A673 (cell line): ENCODE measurements at regions of chr19 and their contacts with region 1.

Region 1: GRCh38 chr19:38335949-38336637 is 463 bp downstream of the CATSPERG start:
- DNase-seq: peak; percentile 98
- H3K4me3 ChIP-seq: peak overlapping the region; percentile 59
- H3K27ac ChIP-seq: peak overlapping the region; percentile 61
- H3K4me1 ChIP-seq: no peaks in the 10 kb centered on the region
- H3K27me3 ChIP-seq: no peaks in the 10 kb centered on the region
- CTCF ChIP-seq: no peak

Region 2: DNA sequence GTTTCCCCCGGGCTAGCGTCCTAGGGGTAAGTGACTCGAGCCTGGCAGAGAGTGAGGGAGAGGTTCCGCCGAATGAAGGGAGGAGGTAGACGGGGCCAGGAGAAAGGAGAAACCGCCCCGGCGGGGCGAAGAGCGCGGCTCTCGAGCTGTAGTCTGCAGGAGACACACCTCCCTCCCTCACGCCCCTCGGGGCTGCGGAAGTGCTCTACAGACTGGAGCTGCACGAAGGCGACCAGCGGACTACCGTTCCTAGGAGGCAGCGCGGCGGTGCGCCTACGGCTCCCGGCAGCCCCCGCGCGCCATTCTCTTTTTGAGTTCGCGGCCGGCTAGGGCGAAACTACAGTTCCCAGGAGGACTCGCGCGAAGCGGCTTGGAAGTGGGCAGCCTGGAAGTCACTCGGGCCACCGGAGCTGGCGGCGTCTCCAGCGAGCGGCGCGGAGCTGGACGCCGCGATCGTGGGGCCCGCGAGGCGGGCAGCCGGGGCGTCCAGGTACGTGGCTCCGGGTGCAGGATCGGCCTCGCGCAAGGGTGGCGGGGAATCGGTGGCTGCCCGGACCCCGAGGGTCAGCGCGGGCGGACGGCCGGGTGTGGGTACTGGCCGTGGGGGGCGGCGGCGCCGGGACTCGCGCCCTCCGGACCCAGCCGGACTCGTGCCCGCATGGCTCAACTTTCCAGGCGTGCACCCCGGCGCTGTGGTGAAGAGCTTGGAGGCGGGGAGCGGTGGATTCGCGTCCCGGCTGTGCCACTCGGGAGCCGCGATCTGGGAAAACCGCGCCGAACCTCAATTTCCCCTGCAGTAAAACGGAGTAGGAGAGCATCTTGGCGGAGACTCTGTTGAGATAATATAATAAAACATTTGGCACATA is 429.0 kb before region 1 on chr19 and contains the start of gene SIPA1L3:
- CTCF ChIA-PET with region 1: no interaction called
- POLR2A ChIA-PET with region 1: no interaction called
- intact Hi-C with region 1: loop called (anchors 2 kb)
- DNase-seq: peak; percentile 97
- H3K4me3 ChIP-seq: peak within 1 kb of the TSS; percentile 91
- H3K27ac ChIP-seq: peak within 1 kb of the TSS; percentile 79
- H3K4me1 ChIP-seq: no peaks in the 10 kb centered on the region
- H3K27me3 ChIP-seq: no peaks in the 10 kb centered on the region
- CTCF ChIP-seq: no peak
- total RNA-seq, gene SIPA1L3: 17.5 and 19.9 TPM in 2 replicates

Region 3: GRCh38 chr19:38142176-38143035 is 193.7 kb before region 1 on chr19:
- CTCF ChIA-PET with region 1: interaction called, 4 read pairs
- POLR2A ChIA-PET with region 1: no interaction called
- intact Hi-C with region 1: loop called (anchors 10 kb)
- DNase-seq: peak; percentile 76
- H3K4me3 ChIP-seq: no peak overlapping the region
- H3K27ac ChIP-seq: no peak overlapping the region
- H3K4me1 ChIP-seq: no peaks in the 10 kb centered on the region
- H3K27me3 ChIP-seq: no peaks in the 10 kb centered on the region
- CTCF ChIP-seq: peak; percentile 84

Region 4: DNA sequence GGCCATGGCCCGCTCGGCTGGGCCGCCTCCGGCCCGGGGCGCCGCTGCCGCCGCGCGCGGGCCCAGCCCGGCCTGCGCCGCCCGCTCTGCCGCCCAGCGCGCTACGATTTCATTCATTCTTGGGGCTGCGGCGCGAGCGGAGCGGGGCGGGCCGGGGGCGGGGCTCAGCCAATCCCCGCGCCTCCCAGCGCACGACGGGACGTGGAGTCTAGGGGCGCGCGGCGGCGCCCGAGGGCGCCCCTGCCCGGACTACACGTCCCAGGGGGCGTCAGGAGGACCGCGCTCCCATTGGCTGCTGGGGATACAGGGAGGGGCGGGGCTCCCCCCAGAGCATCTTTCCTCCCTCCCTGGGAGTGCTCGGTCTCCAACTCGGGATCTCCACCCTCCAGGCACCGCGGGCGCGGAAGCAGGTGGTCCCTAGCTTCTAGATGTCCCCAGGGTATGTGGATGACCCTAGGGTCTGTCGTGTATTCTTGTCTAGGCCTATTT is 106.5 kb before region 1 on chr19:
- CTCF ChIA-PET with region 1: interaction called, 3 read pairs
- POLR2A ChIA-PET with region 1: no interaction called
- intact Hi-C with region 1: loop called (anchors 5 kb)
- DNase-seq: peak; percentile 91
- H3K4me3 ChIP-seq: peak overlapping the region; percentile 54
- H3K27ac ChIP-seq: no peak overlapping the region
- H3K4me1 ChIP-seq: no peaks in the 10 kb centered on the region
- H3K27me3 ChIP-seq: peaks cover 2% of the 10 kb centered on the region
- CTCF ChIP-seq: no peak

Region 5: GRCh38 chr19:38245826-38246498 is 90.1 kb before region 1 on chr19:
- CTCF ChIA-PET with region 1: no interaction called
- POLR2A ChIA-PET with region 1: interaction called, 5 read pairs
- intact Hi-C with region 1: loop called (anchors 2 kb)
- DNase-seq: no peak
- H3K4me3 ChIP-seq: no peak overlapping the region
- H3K27ac ChIP-seq: no peak overlapping the region
- H3K4me1 ChIP-seq: no peaks in the 10 kb centered on the region
- H3K27me3 ChIP-seq: no peaks in the 10 kb centered on the region
- CTCF ChIP-seq: no peak

Region 6: DNA sequence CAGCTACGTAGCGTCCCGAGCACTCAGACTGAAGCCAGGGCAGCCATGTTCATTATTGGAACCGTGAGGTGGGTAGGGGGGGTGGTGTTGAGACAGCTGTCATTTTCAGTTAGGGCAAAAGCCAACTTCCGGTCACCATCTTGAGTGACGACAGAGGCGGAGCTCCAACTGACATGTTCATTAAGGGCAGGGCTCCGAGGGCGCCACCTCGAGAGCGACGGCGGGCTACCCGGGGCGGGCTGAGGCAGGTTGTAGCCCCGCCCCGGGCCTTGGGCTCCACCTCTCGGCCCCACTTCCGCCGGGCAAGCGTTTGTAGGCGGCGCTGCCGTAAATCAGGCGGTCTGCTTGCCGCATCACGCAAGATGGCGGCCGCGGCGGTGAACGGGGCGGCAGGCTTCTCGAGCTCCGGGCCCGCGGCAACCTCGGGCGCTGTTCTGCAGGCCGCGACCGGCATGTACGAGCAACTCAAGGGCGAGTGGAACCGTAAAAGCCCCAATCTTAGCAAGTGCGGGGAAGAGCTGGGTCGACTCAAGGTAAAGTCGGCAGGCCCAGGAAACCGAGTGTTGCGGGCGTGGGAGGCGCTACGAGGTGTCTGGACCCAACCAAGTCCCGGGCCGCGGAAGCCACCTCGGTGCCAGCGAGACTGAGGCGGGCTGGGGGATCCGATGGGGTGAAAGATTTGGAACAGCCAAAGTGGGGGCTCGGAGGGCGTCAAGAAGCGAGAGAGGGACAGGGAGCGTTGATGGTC is 38.5 kb after region 1 on chr19 and contains the start of gene PSMD8:
- CTCF ChIA-PET with region 1: no interaction called
- POLR2A ChIA-PET with region 1: no interaction called
- intact Hi-C with region 1: loop called (anchors 5 kb)
- DNase-seq: peak; percentile 98
- H3K4me3 ChIP-seq: peak within 1 kb of the TSS; percentile 83
- H3K27ac ChIP-seq: peak within 1 kb of the TSS; percentile 94
- H3K4me1 ChIP-seq: peaks cover 10% of the 10 kb centered on the region
- H3K27me3 ChIP-seq: no peaks in the 10 kb centered on the region
- CTCF ChIP-seq: no peak; the same call in 1 of the 2 replicates
- total RNA-seq, gene PSMD8: 303 and 321 TPM in 2 replicates

Region 7: DNA sequence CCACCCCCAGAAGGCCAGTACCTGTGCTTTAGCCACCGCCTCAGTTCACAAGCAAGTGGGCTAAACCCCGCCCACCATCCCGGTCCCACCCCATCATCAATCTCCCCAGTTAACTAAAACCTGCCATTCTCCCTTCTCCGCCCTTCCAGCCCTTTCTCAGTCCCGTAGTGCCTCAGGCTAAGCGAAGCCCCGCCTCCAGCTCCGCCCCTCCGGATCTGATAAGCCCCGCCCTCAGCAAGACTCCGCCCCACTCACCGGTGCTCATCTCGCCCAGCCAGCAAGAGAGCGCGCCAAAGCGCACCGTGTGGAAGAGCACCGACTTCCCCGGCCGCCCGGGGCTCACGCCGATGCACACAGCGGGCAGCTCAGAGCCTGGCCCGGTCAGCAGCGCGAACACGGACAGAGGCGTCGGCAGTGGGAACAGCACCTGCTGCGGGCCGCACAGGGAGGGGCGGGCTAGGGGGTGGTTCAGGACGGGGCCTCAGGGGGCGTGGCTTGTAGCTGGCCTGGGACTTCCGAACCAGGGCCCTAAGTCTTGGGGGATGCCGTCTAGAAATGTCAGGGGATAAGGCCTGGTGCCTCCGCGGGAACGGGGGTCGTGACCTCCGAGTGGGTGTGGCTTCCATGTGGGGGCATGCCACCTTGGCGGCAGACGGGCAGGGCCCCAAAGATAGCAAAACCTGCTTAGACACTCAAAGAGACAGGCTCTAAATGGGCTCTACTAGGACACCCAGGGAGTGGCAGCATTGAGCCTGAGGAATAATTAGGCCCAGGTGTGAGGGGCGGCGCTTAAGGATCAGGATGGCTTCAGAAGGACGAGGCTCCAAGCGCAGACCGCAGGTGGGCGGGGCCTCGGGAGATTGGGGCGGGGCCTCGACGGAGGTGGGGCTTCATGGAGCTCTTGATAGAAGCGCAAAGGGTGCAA is 260.2 kb after region 1 on chr19:
- CTCF ChIA-PET with region 1: no interaction called
- POLR2A ChIA-PET with region 1: no interaction called
- intact Hi-C with region 1: no loop called
- DNase-seq: peak; percentile 65
- H3K4me3 ChIP-seq: peak overlapping the region; percentile 35
- H3K27ac ChIP-seq: no peak overlapping the region
- H3K4me1 ChIP-seq: no peaks in the 10 kb centered on the region
- H3K27me3 ChIP-seq: no peaks in the 10 kb centered on the region
- CTCF ChIP-seq: no peak

Region 8: DNA sequence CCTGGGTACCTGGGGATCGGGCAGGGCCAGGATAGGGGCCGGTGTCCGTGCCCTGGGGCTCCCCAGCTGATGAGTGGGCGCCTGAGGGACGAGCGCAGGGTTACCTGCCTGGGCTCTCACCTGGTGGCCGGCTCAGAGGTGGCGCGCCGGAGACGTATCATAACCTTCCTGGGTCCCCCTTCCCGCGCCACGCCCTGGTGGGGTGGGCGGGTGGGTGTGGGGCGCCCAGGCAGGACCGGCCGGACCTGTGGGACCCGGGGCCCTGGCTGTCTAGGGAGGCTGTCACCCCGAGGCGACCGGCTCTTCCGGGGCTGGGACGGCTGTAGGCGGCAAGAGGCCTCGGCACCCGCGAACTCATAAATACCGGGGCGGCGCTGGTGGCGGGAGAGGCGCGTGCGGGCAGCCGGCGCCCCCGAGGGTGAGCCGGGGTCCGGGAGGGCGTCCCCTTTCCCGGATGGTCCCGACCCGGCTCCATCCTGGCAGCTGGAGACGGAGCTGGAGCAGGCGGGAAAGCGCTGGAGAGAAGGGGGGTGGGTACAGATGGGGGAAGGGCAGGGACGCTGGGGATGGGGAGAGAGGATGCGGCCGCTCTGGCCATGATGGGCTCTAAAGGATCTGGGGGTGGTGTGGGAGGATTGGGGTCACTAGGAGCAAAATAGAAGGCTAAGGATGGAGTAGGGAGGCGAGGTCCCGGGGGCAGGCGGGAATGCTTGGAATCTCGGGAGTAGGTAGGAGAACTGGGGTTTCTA is 748.1 kb after region 1 on chr19 and contains the start of gene ACP7:
- CTCF ChIA-PET with region 1: no interaction called
- POLR2A ChIA-PET with region 1: no interaction called
- intact Hi-C with region 1: no loop called
- DNase-seq: no peak
- H3K4me3 ChIP-seq: no peak within 1 kb of the TSS
- H3K27ac ChIP-seq: no peak within 1 kb of the TSS
- H3K4me1 ChIP-seq: no peaks in the 10 kb centered on the region
- H3K27me3 ChIP-seq: peaks cover 50% of the 10 kb centered on the region
- CTCF ChIP-seq: no peak
- total RNA-seq, gene ACP7: not detected in 2 replicates